K562 (cell line): ENCODE measurements at regions of chr13 and their contacts with region 1.

Region 1: DNA sequence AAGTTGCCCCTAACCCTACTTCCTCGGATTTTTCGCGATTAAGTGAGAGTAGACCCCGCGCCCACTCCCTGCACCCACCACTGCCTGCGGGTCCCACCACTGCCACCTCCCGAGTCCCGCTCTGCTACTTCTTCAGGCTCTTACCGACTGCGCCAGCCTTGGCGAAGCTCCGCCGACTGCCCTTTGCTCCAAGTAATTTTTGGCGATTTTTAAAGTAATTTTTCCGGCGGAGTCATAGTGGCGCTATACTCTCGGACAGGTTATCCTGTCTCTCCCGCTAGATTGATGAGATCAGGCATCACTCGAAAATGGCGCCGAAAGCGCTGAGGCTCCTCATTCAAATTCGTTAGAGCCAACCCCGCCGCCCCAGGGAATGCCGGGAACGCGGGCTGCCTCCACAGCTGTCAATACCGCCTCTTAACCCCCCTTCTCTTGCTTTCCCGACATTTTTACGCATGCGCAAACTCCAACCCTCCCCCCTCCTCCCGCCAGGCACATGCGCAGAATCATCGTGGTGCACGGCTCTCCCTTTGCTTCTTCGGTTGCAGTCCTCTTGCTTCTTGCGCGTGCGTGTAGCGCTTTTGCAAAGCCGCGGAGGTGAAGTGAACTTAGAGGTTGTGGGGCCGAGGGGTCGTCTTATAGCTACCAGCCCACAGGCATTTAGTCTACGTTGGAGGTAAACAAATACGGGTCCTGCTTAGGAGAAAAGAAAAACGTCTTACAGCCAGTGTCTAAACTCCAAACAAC is 66.6 kb downstream of the KCNRG start:
- DNase-seq: peak; percentile 86 to 97 (median 90)
- ATAC-seq: peak; percentile 74
- H3K4me3 ChIP-seq: peak overlapping the region; percentile 69
- H3K27ac ChIP-seq: peak overlapping the region; percentile 98
- H3K4me1 ChIP-seq: peaks cover 2 to 5% of the 10 kb centered on the region in 2 experiments; a peak in 2 of 5 replicates
- H3K27me3 ChIP-seq: no peaks in the 10 kb centered on the region
- CTCF ChIP-seq: peak in 2 of 3 experiments; percentile 8 to 23; a peak in 2 of 6 replicates
- EP300 ChIP-seq: no peak; the same call in 1 of the 2 replicates
- POLR2A ChIP-seq: peak; percentile 82
- RAD21 ChIP-seq: no peak

Region 2: DNA sequence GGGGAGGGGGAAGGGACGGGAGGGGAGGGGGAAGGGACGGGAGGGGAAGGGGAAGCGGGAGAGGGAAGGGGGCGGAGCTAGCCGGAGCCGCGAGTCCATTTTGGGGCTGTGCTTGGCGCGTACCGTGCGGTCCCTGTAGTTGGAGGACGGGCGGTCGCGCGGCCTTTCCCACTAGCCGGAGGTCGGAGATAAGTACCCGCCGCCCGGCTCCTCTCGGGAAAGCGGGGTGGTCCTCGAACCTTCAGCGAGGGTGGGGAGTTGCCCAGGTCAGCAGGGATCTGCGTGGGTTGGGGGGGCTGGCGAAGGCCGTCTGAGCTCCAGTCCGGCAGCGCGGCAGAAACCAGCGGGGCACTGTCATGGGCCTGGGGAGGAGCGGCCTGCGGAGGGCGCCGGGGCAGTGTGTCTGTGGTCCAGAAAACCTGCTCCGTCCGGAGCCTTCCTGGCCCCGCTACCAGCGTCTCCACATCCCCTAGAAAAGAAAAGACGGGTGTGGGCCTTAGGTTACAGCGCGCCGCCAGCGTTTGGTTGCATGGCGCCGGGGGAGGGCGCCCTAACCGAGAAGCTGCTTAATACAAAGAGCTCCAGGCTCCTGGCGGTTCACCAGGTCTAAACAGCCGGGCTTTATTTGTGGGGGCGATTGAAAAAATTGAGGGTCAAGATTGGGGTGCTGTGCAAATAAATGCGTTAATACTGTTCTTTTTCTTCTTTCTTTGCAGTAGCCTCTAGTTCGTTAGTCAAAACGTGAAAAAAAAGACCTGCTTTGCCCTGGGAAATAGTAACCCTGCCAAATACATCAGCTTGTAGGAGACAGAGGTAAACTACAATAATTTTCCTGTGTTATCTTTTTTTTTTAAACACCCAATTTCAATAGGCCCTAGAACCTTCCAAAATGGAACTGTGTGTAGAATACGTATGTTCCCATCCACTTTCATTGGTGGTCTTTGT is 84.6 kb before region 1 on chr13 and contains the start of gene TRIM13:
- CTCF ChIA-PET with region 1: interaction called, 3 read pairs
- POLR2A ChIA-PET with region 1: interaction called, 27 read pairs
- in situ Hi-C with region 1: no loop called
- intact Hi-C with region 1: loop called (anchors 1 kb)
- DNase-seq: peak in 2 of 4 experiments; percentile 56 to 90
- ATAC-seq: peak; percentile 89
- H3K4me3 ChIP-seq: peak within 1 kb of the TSS; percentile 87
- H3K27ac ChIP-seq: peak within 1 kb of the TSS; percentile 98
- H3K4me1 ChIP-seq: peaks cover 5 to 7% of the 10 kb centered on the region in 2 experiments; a peak in 4 of 5 replicates
- H3K27me3 ChIP-seq: no peaks in the 10 kb centered on the region
- CTCF ChIP-seq: peak; percentile 78 to 93 (median 79)
- EP300 ChIP-seq: no peak
- POLR2A ChIP-seq: peak; percentile 88
- RAD21 ChIP-seq: peak; percentile 40 to 61
- polyA plus RNA-seq, gene TRIM13: 19.9 to 24.8 TPM

Region 3: DNA sequence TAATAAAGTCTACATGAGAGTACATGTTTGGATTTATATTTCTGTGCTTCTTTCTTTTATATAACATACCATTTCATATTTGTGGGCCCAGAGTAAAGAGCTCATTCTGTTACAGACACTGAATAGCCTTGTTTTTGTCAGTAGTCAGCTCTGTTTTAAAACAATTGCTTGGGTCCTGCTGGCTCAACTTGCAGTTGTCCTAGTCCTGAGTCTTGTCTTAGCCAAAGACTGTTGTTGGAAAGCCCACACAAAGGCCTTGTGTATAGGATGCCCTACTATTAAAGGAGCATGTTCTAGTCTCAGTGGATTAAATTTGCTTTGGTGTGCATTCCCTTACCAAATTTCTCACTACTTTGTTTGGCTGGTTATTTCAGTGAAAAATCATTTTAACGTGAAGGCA is 70.4 kb before region 1 on chr13:
- CTCF ChIA-PET with region 1: no interaction called
- POLR2A ChIA-PET with region 1: no interaction called
- in situ Hi-C with region 1: no loop called
- intact Hi-C with region 1: no loop called
- DNase-seq: no peak
- ATAC-seq: no peak
- H3K4me3 ChIP-seq: no peak overlapping the region
- H3K27ac ChIP-seq: no peak overlapping the region
- H3K4me1 ChIP-seq: peaks cover 0 to 23% of the 10 kb centered on the region in 2 experiments; a peak in 2 of 5 replicates
- H3K27me3 ChIP-seq: no peaks in the 10 kb centered on the region
- CTCF ChIP-seq: no peak
- EP300 ChIP-seq: no peak
- POLR2A ChIP-seq: no peak
- RAD21 ChIP-seq: no peak

Region 4: GRCh38 chr13:50123862-50124536 is 42.1 kb after region 1 on chr13:
- CTCF ChIA-PET with region 1: no interaction called
- POLR2A ChIA-PET with region 1: interaction called, 11 read pairs
- in situ Hi-C with region 1: no loop called
- intact Hi-C with region 1: loop called (anchors 2 kb)
- DNase-seq: peak in 3 of 4 experiments; percentile 88 to 92 (median 89)
- ATAC-seq: peak; percentile 83
- H3K4me3 ChIP-seq: peak overlapping the region; percentile 87
- H3K27ac ChIP-seq: peak overlapping the region; percentile 90
- H3K4me1 ChIP-seq: peaks cover 27 to 35% of the 10 kb centered on the region in 2 experiments; a peak in 4 of 5 replicates
- H3K27me3 ChIP-seq: no peaks in the 10 kb centered on the region
- CTCF ChIP-seq: no peak
- EP300 ChIP-seq: peak; percentile 32; the same call in 1 of the 2 replicates
- POLR2A ChIP-seq: peak; percentile 78
- RAD21 ChIP-seq: no peak

Region 5: DNA sequence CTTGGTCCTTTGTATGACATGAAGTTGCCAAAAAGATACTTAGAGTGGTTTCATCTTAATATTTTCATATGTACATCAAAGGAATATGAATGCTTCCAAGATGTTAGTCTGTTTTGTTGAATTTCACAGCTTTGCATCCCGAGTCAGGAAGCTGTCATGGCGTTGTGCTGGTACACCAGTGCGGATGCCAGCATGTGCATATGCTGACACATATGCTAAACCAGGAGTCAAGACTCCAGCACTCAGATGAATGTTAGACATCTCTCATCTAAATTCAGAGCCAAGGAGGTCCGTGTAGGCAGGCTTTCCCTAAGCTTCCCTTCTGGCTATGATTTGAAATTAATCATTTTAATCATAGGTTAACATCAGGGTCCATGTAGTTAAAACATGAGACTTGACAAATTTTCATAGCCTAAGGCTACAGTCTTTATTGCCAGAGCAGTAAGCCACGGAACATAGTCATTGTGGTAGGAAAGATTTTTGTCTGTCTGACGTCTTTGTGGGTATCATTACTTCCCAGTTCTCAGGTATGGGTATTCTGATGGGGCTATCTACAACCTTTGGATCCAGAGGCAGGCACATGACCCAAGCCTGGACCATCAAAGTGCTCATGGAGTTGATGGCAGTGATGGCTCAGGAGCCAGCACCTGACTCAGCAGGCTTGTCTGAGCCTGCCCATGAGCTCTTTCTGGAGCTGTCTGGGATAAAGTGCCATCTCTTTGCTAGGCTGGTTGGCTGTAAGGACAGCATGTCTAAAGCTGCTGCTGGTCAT is 179.5 kb after region 1 on chr13:
- CTCF ChIA-PET with region 1: no interaction called
- POLR2A ChIA-PET with region 1: no interaction called
- in situ Hi-C with region 1: no loop called
- intact Hi-C with region 1: no loop called
- DNase-seq: no peak
- ATAC-seq: no peak
- H3K4me3 ChIP-seq: no peak overlapping the region
- H3K27ac ChIP-seq: no peak overlapping the region
- H3K4me1 ChIP-seq: no peaks in the 10 kb centered on the region; a peak in 1 of 5 replicates
- H3K27me3 ChIP-seq: no peaks in the 10 kb centered on the region
- CTCF ChIP-seq: no peak
- EP300 ChIP-seq: no peak
- POLR2A ChIP-seq: no peak
- RAD21 ChIP-seq: no peak

Region 6: GRCh38 chr13:50319635-50320255 is 237.9 kb after region 1 on chr13:
- CTCF ChIA-PET with region 1: no interaction called
- POLR2A ChIA-PET with region 1: no interaction called
- in situ Hi-C with region 1: no loop called
- intact Hi-C with region 1: loop called (anchors 10 kb)
- DNase-seq: peak; percentile 7 to 78 (median 33)
- ATAC-seq: peak; percentile 87
- H3K4me3 ChIP-seq: no peak overlapping the region
- H3K27ac ChIP-seq: peak overlapping the region; percentile 80
- H3K4me1 ChIP-seq: peaks cover 0 to 24% of the 10 kb centered on the region in 2 experiments; a peak in 4 of 5 replicates
- H3K27me3 ChIP-seq: no peaks in the 10 kb centered on the region
- CTCF ChIP-seq: no peak
- EP300 ChIP-seq: peak; percentile 75
- POLR2A ChIP-seq: no peak
- RAD21 ChIP-seq: 0 out of 4 replicates have a peak, but pooled peaks of 1 of the 2 experiments have one; percentile 18

Region 7: DNA sequence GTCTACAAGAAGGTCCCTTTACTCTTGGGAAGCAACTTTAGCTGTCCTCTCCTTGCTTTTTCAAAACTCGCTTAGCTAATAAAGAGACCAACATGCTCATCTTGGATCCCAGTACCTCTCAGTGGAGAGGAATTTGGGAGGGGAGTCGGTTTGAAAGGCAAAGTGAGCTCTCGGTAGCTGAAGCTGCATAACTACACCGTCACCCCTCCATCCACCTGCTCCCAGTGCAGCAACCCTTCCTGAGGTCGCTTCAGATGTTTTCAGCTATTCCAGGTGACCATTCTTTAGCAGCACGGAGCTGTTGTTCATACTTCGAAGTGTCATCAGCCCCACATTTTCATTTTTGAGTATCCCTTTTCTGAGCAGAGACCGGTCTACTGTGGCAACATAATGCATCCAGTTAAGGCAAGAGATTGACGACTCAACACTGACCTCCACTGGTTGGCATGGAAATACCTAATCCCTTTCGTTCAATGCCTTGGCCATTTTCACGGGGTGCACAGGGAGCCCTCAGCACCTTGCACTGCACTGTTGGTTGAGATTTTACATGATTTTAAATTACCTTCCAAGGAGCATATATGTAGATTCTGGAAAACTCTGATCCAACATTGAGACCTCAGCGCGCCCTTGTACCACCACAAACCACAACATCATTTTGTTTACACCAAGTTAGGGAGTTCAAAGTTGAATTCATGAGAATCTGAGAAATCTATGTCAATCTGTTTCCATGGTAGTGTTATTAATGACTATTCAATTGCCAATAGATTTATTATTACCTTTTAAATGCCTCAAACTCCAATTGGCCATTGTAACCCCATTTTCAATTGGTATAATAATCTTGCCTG is 719.5 kb after region 1 on chr13:
- CTCF ChIA-PET with region 1: no interaction called
- POLR2A ChIA-PET with region 1: no interaction called
- in situ Hi-C with region 1: no loop called
- intact Hi-C with region 1: loop called (anchors 5 kb)
- DNase-seq: peak; percentile 17 to 71 (median 32)
- ATAC-seq: peak; percentile 94
- H3K4me3 ChIP-seq: no peak overlapping the region
- H3K27ac ChIP-seq: no peak overlapping the region
- H3K4me1 ChIP-seq: no peaks in the 10 kb centered on the region
- H3K27me3 ChIP-seq: no peaks in the 10 kb centered on the region
- CTCF ChIP-seq: peak; percentile 66 to 74 (median 70)
- EP300 ChIP-seq: no peak
- POLR2A ChIP-seq: no peak
- RAD21 ChIP-seq: peak; percentile 85 to 87